K562 (cell line): ENCODE measurements at regions of chr3 and their contacts with region 1.

Region 1: GRCh38 chr3:171375666-171376595 is 84.3 kb downstream of the TNIK start:
- DNase-seq: peak in 2 of 4 experiments; percentile 22 to 57
- ATAC-seq: peak; percentile 75
- H3K4me3 ChIP-seq: no peak overlapping the region
- H3K27ac ChIP-seq: peak overlapping the region; percentile 47; the same call in 2 of the 3 replicates
- H3K4me1 ChIP-seq: peaks cover 0 to 43% of the 10 kb centered on the region in 2 experiments; a peak in 4 of 5 replicates
- H3K27me3 ChIP-seq: no peaks in the 10 kb centered on the region
- CTCF ChIP-seq: no peak
- EP300 ChIP-seq: peak; percentile 23; the same call in 1 of the 2 replicates
- POLR2A ChIP-seq: no peak
- RAD21 ChIP-seq: peak in 1 of 2 experiments; percentile 19; a peak in 2 of 4 replicates

Region 2: GRCh38 chr3:171428321-171428787 is 52.4 kb after region 1 on chr3:
- CTCF ChIA-PET with region 1: no interaction called
- POLR2A ChIA-PET with region 1: no interaction called
- in situ Hi-C with region 1: no loop called
- intact Hi-C with region 1: loop called (anchors 5 kb)
- DNase-seq: peak; percentile 66 to 90 (median 79)
- ATAC-seq: peak; percentile 97
- H3K4me3 ChIP-seq: no peak overlapping the region
- H3K27ac ChIP-seq: peak overlapping the region; percentile 81
- H3K4me1 ChIP-seq: peaks cover 15 to 40% of the 10 kb centered on the region in 2 experiments
- H3K27me3 ChIP-seq: no peaks in the 10 kb centered on the region
- CTCF ChIP-seq: peak; percentile 13 to 51 (median 50); a peak in 5 of 6 replicates
- EP300 ChIP-seq: peak; percentile 97
- POLR2A ChIP-seq: no peak
- RAD21 ChIP-seq: peak; percentile 30 to 37